Activated CD4-positive, alpha-beta memory T cell treated with anti-CD3 and anti-CD28 coated beads for 36 hours (primary cell): ENCODE measurements at regions of chr2 and their contacts with region 1.

Region 1: DNA sequence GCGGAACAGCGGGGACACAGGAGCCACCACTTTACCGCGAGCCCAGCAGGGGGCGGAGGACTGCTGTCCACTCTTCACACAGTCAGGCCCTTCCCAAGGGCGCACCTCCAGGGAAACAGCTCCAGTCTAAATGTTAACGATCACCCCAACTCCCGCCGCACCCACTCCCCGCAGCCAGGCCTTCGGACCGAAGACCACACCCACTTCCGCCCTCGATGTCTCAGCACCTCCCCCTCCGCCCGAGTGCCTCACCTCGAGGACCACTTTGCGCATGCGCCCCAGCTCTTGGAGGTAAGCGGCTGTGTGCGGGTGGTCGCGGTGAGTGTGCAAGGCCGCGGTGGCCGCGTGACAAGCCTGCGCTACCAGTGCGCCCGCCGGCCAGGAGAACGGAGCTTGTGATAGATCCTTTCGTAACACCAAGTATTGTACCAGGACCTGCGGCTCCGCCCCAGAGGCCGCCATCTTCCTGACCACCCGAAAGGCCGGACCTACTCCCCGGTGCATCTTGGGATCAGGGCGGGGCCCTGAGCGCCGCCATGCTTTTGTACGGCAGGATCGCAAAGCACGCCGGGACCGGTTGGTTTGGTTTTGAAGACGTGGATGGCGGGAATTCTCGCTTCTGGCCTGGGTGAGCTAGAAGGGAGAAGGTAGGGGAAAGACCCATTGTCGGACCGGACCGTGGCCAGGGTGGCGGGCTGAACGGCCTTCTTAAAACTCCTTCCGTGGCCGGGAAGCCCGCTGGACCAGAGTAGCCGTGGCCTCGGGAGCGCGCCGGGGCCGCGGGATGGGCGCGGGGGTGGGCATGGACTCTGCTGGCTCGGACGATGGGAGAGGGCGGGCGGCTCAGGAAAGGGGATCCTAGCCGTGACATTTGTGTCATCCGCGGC is at the starts of genes CENPO and PTRHD1:
- DNase-seq: peak; percentile 97
- H3K4me3 Mint-ChIP-seq: peak within 1 kb of the TSS; percentile 98
- H3K27ac Mint-ChIP-seq: peak within 1 kb of the TSS; percentile 100
- H3K4me1 Mint-ChIP-seq: peaks cover 35% of the 10 kb centered on the region
- H3K27me3 Mint-ChIP-seq: no peaks in the 10 kb centered on the region
- total RNA-seq, gene CENPO: 39.9 to 42.4 TPM
- total RNA-seq, gene PTRHD1: 19.2 to 20.3 TPM

Region 2: DNA sequence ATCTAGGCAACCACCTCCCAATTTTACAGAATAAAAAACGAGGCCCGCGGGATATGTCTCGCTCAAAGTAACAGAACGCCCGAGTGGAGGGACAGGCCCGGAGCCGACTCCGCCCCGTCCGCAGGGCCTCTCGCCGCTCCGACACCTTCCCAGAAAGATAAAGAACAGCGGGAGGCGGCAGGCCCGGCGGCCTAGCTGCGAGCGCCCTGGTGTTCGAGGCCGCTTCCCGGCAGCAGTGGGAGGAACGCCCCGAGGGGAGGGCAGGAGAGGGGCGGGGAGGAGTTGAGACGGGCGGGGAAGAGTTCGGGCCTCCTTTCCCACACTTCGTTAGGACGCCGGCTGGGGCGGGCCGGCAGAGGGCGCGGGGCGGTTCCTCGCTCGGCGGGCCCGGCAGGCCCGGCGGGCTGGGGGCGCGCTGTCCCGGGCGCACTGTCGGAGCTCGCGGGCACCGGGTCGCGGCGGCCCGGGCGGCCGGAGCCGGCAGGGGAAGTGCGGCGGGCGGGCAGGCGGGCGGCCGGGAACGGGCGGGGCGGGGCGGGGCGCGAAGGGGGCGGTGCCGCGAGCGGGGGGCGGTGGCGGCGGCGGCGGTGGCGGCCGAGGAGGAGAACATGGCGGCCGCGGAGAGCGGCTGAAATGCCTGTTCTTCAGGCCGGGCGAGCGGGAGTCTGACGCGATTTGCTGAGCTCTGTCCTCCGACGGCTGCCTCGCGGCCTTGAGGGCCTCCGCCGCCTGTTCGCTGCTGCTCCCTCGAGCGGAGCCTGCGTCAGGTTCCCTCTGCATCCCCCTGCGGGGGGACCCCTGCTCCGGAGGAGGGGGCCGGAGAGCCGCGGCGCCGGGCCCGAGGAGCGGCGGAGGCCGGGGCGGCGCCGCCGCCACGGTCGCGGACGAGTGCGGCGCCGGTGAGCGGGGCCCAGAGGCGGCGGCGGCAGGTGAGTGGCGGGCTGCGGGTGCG is 302.2 kb before region 1 on chr2 and contains the start of gene NCOA1:
- CTCF ChIA-PET with region 1: interaction called, 3 read pairs
- POLR2A ChIA-PET with region 1: interaction called, 7 read pairs
- intact Hi-C with region 1: loop called (anchors 5 kb)
- DNase-seq: peak; percentile 95
- H3K4me3 Mint-ChIP-seq: peak within 1 kb of the TSS; percentile 83
- H3K27ac Mint-ChIP-seq: peak within 1 kb of the TSS; percentile 91
- H3K4me1 Mint-ChIP-seq: peaks cover 48% of the 10 kb centered on the region
- H3K27me3 Mint-ChIP-seq: no peaks in the 10 kb centered on the region
- total RNA-seq, gene NCOA1: 21.3 to 24.0 TPM

Region 3: DNA sequence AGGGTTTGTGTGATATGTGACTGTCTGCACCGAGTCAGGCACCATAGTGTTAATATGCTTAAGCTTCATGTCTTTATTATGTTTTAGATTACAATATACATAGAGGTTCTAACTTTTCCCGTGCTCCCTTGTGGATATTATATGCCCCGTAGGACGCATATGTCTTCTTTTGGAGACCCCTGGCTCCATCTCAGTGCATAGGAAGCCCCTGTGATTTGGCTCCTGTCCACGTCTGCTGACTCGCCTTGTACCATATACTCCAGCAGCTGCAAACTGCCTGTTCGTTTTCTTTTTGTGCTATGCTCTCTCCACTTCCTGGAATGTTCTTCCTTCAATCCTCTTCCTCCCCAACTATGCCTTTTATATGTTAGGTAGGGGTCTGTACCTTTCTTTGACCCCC is 110.8 kb before region 1 on chr2:
- CTCF ChIA-PET with region 1: no interaction called
- POLR2A ChIA-PET with region 1: no interaction called
- intact Hi-C with region 1: no loop called
- DNase-seq: no peak
- H3K4me3 Mint-ChIP-seq: no peak overlapping the region
- H3K27ac Mint-ChIP-seq: no peak overlapping the region
- H3K4me1 Mint-ChIP-seq: peaks cover 6% of the 10 kb centered on the region
- H3K27me3 Mint-ChIP-seq: no peaks in the 10 kb centered on the region

Region 4: GRCh38 chr2:24754985-24755705 is 38.0 kb before region 1 on chr2:
- CTCF ChIA-PET with region 1: no interaction called
- POLR2A ChIA-PET with region 1: no interaction called
- intact Hi-C with region 1: no loop called
- DNase-seq: no peak
- H3K4me3 Mint-ChIP-seq: no peak overlapping the region
- H3K27ac Mint-ChIP-seq: no peak overlapping the region
- H3K4me1 Mint-ChIP-seq: no peaks in the 10 kb centered on the region
- H3K27me3 Mint-ChIP-seq: no peaks in the 10 kb centered on the region

Region 5: DNA sequence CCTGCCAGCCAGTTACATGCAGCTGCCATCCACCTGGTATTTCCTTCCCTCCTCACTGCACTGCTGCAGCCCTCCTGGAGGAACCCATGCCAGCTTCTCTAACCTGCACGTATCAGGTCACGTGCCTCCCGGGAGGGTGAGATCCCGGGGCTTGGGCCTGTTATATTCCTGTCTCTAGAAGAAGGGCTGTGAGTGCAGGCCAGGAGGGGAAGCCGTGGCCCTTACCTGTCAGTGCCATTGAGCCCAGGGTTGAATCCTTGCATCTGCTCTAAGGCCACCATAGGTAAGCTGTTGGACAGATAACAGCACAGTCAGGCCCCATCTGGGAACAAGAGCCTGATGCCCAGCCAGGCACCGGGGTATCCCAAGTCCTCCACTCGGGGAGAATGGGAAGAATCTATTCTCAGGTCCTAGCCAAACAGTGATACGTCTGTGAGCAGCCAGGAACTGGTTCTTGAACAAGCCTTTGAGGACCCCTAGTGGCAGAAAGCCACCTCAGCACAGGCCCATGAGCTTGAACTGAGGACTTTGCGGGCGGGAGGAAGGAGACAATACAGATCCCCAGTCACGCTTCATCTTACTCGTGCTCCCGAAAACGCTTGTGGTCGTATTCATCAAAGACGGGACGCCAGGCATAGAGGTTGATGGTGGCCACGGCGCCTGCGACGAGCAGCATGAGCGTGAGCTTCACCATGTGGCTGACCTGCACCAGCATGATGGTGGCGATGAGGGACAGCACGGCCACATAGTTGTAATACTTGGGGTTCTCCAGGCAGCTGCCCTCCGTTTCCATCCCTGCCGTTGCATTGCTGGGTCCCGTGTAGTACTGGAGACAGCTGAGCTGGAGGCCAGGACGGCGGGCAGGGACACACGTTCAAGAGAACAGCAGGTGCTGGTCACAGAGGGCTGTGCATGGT is 34.5 kb after region 1 on chr2:
- CTCF ChIA-PET with region 1: interaction called, 19 read pairs
- POLR2A ChIA-PET with region 1: no interaction called
- intact Hi-C with region 1: no loop called
- DNase-seq: peak; percentile 81
- H3K4me3 Mint-ChIP-seq: no peak overlapping the region
- H3K27ac Mint-ChIP-seq: peak overlapping the region; percentile 3
- H3K4me1 Mint-ChIP-seq: peaks cover 25% of the 10 kb centered on the region
- H3K27me3 Mint-ChIP-seq: no peaks in the 10 kb centered on the region

Region 6: DNA sequence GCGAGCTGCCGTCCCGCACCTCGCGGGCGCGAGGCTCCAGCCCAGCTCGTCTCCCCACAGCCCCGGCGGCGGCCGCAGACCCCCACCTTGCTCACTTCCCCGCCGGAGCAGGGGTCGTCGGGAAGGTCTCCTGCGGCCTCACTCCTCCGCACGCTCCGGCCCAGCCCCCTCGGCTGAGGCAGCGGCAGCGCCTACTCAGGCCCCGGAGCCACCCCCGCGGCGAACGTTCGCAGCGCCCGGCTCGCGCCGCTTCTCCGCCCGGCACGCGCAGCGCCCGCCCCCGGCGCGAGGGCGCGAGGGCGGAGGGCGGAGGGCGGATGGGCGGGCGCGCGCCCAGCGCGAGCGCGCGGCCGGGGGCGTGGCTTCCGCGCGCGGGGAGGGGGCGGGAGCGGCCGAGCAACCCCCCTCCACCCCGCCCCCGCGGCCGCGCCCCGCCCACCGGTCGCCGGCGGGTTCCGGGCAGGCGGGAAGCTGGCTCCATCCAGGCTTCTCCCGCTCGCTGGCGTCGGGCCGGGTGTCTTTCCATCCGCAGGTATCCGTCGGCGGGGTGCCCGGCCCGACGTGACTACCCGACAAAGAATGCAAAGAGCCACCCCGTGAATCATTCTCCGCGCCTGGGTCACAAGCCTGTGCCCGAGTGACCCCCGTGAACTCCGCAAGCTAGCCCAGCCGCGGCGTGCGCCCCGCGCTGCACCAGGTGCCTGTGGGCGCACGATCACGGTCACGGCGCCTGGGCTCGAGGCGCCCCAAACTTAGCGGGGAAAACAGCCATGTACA is 880.4 kb after region 1 on chr2 and contains the start of gene DTNB:
- CTCF ChIA-PET with region 1: no interaction called
- POLR2A ChIA-PET with region 1: no interaction called
- intact Hi-C with region 1: loop called (anchors 10 kb)
- DNase-seq: peak; percentile 85
- H3K4me3 Mint-ChIP-seq: peak within 1 kb of the TSS; percentile 80
- H3K27ac Mint-ChIP-seq: peak within 1 kb of the TSS; percentile 62
- H3K4me1 Mint-ChIP-seq: peaks cover 27% of the 10 kb centered on the region
- H3K27me3 Mint-ChIP-seq: no peaks in the 10 kb centered on the region
- total RNA-seq, gene DTNB: 20.8 to 25.1 TPM